H1 (cell line): ENCODE measurements at regions of chr20 and their contacts with region 1.

Region 1: GRCh38 chr20:6583134-6583738 is 184.2 kb upstream of the BMP2 start:
- DNase-seq: peak; percentile 7 to 48
- H3K4me3 ChIP-seq: no peak overlapping the region
- H3K27ac ChIP-seq: no peak overlapping the region
- H3K4me1 ChIP-seq: no peaks in the 10 kb centered on the region
- H3K27me3 ChIP-seq: no peaks in the 10 kb centered on the region
- CTCF ChIP-seq: peak in 2 of 3 experiments; percentile 65 to 72; a peak in 3 of 4 replicates
- EP300 ChIP-seq: no peak
- POLR2A ChIP-seq: no peak
- RAD21 ChIP-seq: peak; percentile 78 to 83

Region 2: GRCh38 chr20:6265204-6265904 is 317.9 kb before region 1 on chr20:
- CTCF ChIA-PET with region 1: interaction called, 10 read pairs
- POLR2A ChIA-PET with region 1: no interaction called
- DNase-seq: no peak
- H3K4me3 ChIP-seq: no peak overlapping the region
- H3K27ac ChIP-seq: no peak overlapping the region
- H3K4me1 ChIP-seq: no peaks in the 10 kb centered on the region; a peak in 2 of 7 replicates
- H3K27me3 ChIP-seq: no peaks in the 10 kb centered on the region; a peak in 1 of 7 replicates
- CTCF ChIP-seq: peak in 2 of 3 experiments; percentile 43 to 46; a peak in 3 of 4 replicates
- EP300 ChIP-seq: no peak
- POLR2A ChIP-seq: no peak
- RAD21 ChIP-seq: peak; percentile 84

Region 3: DNA sequence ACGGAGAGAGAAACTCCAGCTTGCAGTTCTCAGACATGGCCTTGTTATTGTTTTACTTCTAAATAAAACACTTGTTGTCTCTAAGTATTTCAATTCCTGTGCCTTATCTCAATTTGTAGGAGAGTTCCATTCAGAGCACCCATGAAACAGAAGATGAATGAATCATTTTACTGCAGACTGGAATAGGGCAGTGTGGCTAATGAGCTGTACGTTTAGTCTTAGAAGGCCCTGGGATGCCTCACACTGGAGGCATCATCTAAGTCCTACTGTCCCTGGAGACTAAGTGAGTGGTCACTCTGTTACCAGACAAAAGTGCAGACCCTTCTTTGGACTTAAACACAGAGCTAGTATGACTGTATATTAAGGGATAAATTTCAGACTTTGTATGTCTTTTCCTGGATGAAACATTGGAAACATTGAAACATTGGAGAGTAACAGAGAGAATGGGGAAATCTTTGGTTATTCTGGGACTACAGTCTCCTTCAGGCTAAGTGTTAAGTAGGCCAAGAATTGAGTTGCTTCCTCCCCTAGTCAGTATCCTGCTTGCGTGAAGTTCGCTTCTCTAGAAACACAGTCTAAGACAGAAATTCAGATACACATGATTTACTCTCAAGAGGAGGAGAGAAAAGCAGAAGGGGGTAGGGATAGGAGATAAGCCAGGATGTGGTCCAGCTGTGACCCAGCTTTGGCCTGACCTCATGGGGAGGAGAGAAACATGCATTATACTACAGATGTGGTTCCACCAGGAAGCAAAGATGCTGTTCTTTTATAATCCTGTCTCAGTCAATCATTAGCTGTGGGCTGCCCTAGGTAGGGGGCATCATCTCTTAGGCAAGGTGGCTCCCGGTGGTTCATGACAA is 16.9 kb after region 1 on chr20:
- CTCF ChIA-PET with region 1: interaction called, 22 read pairs
- POLR2A ChIA-PET with region 1: no interaction called
- DNase-seq: no peak
- H3K4me3 ChIP-seq: no peak overlapping the region
- H3K27ac ChIP-seq: no peak overlapping the region
- H3K4me1 ChIP-seq: no peaks in the 10 kb centered on the region
- H3K27me3 ChIP-seq: no peaks in the 10 kb centered on the region
- CTCF ChIP-seq: no peak
- EP300 ChIP-seq: no peak
- POLR2A ChIP-seq: no peak
- RAD21 ChIP-seq: no peak